B cell (primary cell): ENCODE measurements at regions of chr11 and their contacts with region 1.

Region 1: GRCh38 chr11:8863838-8864237 is 47.2 kb upstream of the AKIP1 start:
- DNase-seq: no peak
- ATAC-seq: no peak
- H3K4me3 ChIP-seq: no peak overlapping the region
- H3K4me3 Mint-ChIP-seq: no peak overlapping the region
- H3K27ac ChIP-seq: no peak overlapping the region
- H3K27ac Mint-ChIP-seq: no peak overlapping the region
- H3K4me1 ChIP-seq: no peaks in the 10 kb centered on the region
- H3K4me1 Mint-ChIP-seq: peaks cover 1% of the 10 kb centered on the region
- H3K27me3 ChIP-seq: no peaks in the 10 kb centered on the region
- H3K27me3 Mint-ChIP-seq: peaks cover 36% of the 10 kb centered on the region
- CTCF ChIP-seq: no peak

Region 2: DNA sequence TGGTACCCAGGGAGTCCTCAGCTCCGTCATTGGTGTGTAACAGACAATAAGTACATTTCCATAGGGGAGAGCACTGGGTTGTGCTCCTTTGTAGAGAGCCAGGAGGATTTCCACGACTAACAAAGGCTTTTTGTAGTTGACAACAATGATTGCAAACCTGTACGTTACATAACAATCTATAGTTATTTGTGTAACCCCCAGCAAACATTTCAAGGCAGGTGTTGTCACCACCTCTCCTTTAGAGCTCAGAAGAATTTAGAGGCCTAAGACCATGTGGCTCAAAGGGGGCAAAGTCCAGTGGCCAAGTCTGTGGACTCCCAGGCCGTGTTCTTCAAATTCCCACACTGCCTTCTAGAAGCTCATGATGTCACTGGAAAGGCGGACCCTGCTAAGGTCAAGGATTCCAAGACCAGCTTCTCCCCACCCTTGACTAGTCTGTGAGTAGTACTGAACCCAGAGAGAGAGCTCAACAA is 165.4 kb before region 1 on chr11:
- CTCF ChIA-PET with region 1: no interaction called
- POLR2A ChIA-PET with region 1: interaction called, 11 read pairs
- intact Hi-C with region 1: no loop called
- DNase-seq: no peak
- ATAC-seq: no peak
- H3K4me3 ChIP-seq: no peak overlapping the region
- H3K4me3 Mint-ChIP-seq: no peak overlapping the region
- H3K27ac ChIP-seq: no peak overlapping the region
- H3K27ac Mint-ChIP-seq: no peak overlapping the region
- H3K4me1 ChIP-seq: peaks cover 0 to 7% of the 10 kb centered on the region in 2 donors
- H3K4me1 Mint-ChIP-seq: peaks cover 12% of the 10 kb centered on the region
- H3K27me3 ChIP-seq: no peaks in the 10 kb centered on the region
- H3K27me3 Mint-ChIP-seq: no peaks in the 10 kb centered on the region
- CTCF ChIP-seq: no peak